H1 (cell line): ENCODE measurements at regions of chr18 and their contacts with region 1.

Region 1: GRCh38 chr18:79393635-79394533 is 1.8 kb upstream of the NFATC1 start:
- DNase-seq: peak in 1 of 2 experiments; percentile 78
- H3K4me3 ChIP-seq: peak overlapping the region; percentile 9 to 66 (median 30)
- H3K27ac ChIP-seq: no peak overlapping the region
- H3K4me1 ChIP-seq: peaks cover 0 to 12% (median 7%) of the 10 kb centered on the region in 4 experiments; a peak in 5 of 7 replicates
- H3K27me3 ChIP-seq: peaks cover 39 to 68% (median 58%) of the 10 kb centered on the region in 4 experiments
- CTCF ChIP-seq: no peak
- EP300 ChIP-seq: no peak
- POLR2A ChIP-seq: no peak
- RAD21 ChIP-seq: no peak

Region 2: DNA sequence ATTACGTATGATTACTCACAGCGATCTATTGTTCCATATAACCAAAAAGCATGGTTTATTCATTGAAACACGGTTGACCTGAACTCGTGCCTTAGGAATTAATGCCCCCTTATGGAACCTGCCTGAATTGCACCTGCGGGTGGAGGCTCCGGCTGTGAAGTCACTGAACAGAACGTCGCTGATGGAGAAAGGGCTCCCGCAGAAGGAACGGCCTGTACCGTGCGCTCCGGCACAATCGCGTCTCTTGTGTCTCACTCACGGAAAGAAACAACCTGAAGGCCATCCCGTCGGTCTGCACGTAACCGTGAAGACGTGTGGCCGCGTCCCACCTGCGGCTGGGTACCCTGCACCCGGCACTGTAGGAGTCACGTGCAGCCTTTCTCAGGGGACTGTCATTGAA is 135.0 kb after region 1 on chr18:
- CTCF ChIA-PET with region 1: interaction called, 29 read pairs
- POLR2A ChIA-PET with region 1: no interaction called
- DNase-seq: peak; percentile 34 to 92
- H3K4me3 ChIP-seq: no peak overlapping the region
- H3K27ac ChIP-seq: no peak overlapping the region
- H3K4me1 ChIP-seq: peaks cover 0 to 12% (median 5%) of the 10 kb centered on the region in 4 experiments; a peak in 5 of 7 replicates
- H3K27me3 ChIP-seq: peaks cover 0 to 2% (median 0%) of the 10 kb centered on the region in 4 experiments; a peak in 3 of 7 replicates
- CTCF ChIP-seq: peak in 2 of 3 experiments; percentile 83 to 93; a peak in 3 of 4 replicates
- EP300 ChIP-seq: no peak
- POLR2A ChIP-seq: no peak
- RAD21 ChIP-seq: peak; percentile 93

Region 3: GRCh38 chr18:79644006-79644665 is 250.3 kb after region 1 on chr18:
- CTCF ChIA-PET with region 1: interaction called, 10 read pairs
- POLR2A ChIA-PET with region 1: no interaction called
- DNase-seq: peak in 1 of 2 experiments; percentile 90
- H3K4me3 ChIP-seq: no peak overlapping the region
- H3K27ac ChIP-seq: no peak overlapping the region
- H3K4me1 ChIP-seq: no peaks in the 10 kb centered on the region
- H3K27me3 ChIP-seq: peaks cover 0 to 4% (median under 1%) of the 10 kb centered on the region in 4 experiments; a peak in 4 of 7 replicates
- CTCF ChIP-seq: peak; percentile 88 to 93 (median 92)
- EP300 ChIP-seq: 0 out of 3 replicates have a peak, but pooled peaks of 1 of the 2 experiments have one; percentile 26
- POLR2A ChIP-seq: no peak
- RAD21 ChIP-seq: peak; percentile 99